ENCODE measurements at regions of chr6 and their contacts with region 1.

Region 1: GRCh38 chr6:146650834-146651472 is 52.2 kb downstream of the ADGB start:
- DNase-seq: no peak
- H3K4me3 ChIP-seq: no peak overlapping the region
- H3K27ac ChIP-seq: no peak overlapping the region
- H3K4me1 ChIP-seq: no peaks in the 10 kb centered on the region
- H3K27me3 ChIP-seq: no peaks in the 10 kb centered on the region
- CTCF ChIP-seq: no peak
- POLR2A ChIP-seq: no peak

Region 2: DNA sequence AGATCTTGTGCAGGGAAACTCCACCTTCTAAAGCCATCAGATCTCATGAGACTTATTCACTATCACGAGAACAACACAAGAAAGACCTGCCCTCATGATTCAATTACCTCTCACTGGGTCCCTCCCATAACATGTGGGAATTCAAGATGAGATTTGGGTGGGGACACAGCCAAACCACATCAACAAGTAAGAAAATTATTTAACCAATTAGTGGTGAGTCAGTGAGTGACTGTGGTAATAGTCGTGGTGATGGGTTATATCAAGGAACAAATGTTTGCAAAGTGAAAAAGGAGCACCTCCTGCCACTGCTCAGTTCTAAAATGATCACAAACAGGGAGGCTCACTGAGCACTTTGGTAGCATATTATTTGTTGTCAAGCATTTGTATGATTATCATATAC is 936.2 kb before region 1 on chr6:
- intact Hi-C with region 1: loop called (anchors 10 kb)
- DNase-seq: no peak
- H3K4me3 ChIP-seq: no peak overlapping the region
- H3K27ac ChIP-seq: no peak overlapping the region
- H3K4me1 ChIP-seq: no peaks in the 10 kb centered on the region
- H3K27me3 ChIP-seq: no peaks in the 10 kb centered on the region
- CTCF ChIP-seq: no peak
- POLR2A ChIP-seq: no peak

Measured in breast epithelium (tissue), 4 donors.